ENCODE measurements at regions of chr2 and their contacts with region 1.

Region 1: GRCh38 chr2:205660521-205661124 is 21.7 kb upstream of the NRP2 start:
- DNase-seq: peak in 1 of 2 experiments; percentile 30
- H3K4me3 ChIP-seq: no peak overlapping the region
- H3K27ac ChIP-seq: no peak overlapping the region
- H3K4me1 ChIP-seq: peaks cover 0 to 4% (median 0%) of the 10 kb centered on the region in 4 experiments; a peak in 2 of 7 replicates
- H3K27me3 ChIP-seq: peaks cover 0 to 1% (median 0%) of the 10 kb centered on the region in 4 experiments; a peak in 2 of 7 replicates
- CTCF ChIP-seq: no peak
- EP300 ChIP-seq: no peak
- POLR2A ChIP-seq: no peak
- RAD21 ChIP-seq: no peak

Region 2: GRCh38 chr2:205650450-205650849 is 10.2 kb before region 1 on chr2:
- CTCF ChIA-PET with region 1: interaction called, 10 read pairs
- POLR2A ChIA-PET with region 1: no interaction called
- DNase-seq: peak; percentile 44 to 48
- H3K4me3 ChIP-seq: no peak overlapping the region
- H3K27ac ChIP-seq: no peak overlapping the region
- H3K4me1 ChIP-seq: peaks cover 0 to 14% (median 9%) of the 10 kb centered on the region in 4 experiments; a peak in 5 of 7 replicates
- H3K27me3 ChIP-seq: no peaks in the 10 kb centered on the region; a peak in 2 of 7 replicates
- CTCF ChIP-seq: no peak
- EP300 ChIP-seq: no peak
- POLR2A ChIP-seq: no peak
- RAD21 ChIP-seq: no peak

Measured in H1 (cell line).